Common myeloid progenitor, CD34-positive (primary cell): ENCODE measurements at regions of chr2 and their contacts with region 1.

Region 1: GRCh38 chr2:102020596-102021181 is 28.9 kb downstream of the IL1R2 start:
- DNase-seq: peak; percentile 74 to 84 (median 80)
- H3K4me3 ChIP-seq: no peak overlapping the region
- H3K27ac ChIP-seq: no peak overlapping the region
- H3K4me1 ChIP-seq: peaks cover 0 to 4% (median 1%) of the 10 kb centered on the region in 4 experiments
- H3K27me3 ChIP-seq: no peaks in the 10 kb centered on the region

Region 2: DNA sequence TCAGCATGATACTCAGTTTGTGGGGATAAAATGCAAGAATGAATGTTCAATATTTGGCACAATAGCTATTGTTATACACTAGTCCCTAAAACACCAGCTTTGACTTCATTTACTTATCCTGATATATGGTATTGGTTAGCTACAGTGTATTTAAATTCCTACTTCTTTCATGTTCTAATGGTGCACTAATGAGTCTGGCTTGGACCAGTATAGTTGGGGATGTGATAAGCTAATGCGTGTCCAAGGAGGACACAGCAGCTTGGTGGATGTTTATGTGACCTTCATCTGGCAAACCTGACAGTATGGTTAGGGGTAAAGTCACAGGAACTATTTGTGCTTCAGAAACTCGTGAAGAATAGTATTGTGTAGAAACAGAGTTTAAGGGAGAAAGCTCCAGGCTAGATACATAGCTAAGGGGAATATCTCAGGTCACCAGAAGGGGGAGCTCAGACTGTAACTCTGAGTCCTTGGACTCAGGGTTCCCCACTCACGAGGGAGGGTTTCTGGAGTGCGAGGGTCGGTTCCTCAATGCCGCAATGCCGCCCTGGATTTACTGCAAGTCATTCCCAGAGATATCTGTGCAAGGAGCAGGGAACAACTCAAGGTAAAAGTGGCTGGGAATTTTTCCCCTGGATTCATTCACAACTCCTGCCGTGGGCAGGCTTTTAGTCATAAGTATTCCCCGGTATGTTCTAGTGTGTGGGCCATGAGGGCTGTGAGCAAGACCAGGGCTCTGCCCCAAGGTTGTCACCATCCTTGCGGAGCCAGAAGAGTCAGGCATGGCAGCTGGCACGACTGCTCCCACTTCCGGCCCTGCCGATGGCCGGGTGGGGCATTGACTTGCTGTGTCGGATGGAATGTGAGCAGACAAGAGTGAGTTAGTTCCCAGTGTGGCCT is 14.5 kb before region 1 on chr2:
- CTCF ChIA-PET with region 1: interaction called, 13 read pairs
- POLR2A ChIA-PET with region 1: no interaction called
- DNase-seq: peak; percentile 68 to 84 (median 76)
- H3K4me3 ChIP-seq: no peak overlapping the region
- H3K27ac ChIP-seq: no peak overlapping the region
- H3K4me1 ChIP-seq: peaks cover 0 to 17% (median 10%) of the 10 kb centered on the region in 4 experiments
- H3K27me3 ChIP-seq: no peaks in the 10 kb centered on the region

Region 3: DNA sequence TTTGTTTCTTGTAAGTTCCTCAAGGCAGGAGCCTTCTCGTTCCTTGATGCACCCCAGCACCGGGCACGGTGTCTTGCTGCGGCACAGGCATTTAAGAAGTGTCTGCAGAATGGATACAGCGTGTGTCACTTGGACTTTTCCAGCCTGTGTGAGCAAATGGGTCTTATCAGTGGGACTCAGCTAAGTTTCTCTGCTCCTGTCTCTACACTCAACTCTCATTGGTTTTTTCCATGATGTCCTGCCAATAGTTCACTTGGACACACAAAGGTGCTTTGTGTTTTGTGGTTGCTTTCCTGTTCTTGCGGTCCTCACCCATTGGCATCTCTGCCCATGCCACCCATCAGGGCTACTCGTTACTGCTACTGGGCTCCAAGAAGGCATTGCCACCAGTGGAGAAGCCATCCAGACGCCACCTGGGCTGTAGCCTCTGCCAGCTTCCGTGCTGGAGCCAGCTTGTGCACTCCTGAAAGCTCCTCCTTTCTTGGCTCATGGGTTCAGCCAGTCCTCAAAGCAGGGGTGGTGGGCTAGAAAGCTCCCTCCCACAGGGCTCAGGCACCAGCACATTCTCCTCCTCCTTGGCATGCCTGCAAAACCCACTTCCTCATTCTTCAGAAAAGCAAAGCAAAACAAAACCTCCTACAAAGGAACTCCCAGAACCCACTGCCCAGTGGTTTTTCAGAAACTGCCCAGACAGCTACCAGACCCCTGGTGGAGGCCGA is 12.5 kb after region 1 on chr2:
- CTCF ChIA-PET with region 1: interaction called, 10 read pairs
- POLR2A ChIA-PET with region 1: no interaction called
- DNase-seq: peak; percentile 76 to 94 (median 92)
- H3K4me3 ChIP-seq: peak overlapping the region in 4 of 7 experiments; percentile 7 to 59 (median 44)
- H3K27ac ChIP-seq: no peak overlapping the region
- H3K4me1 ChIP-seq: peaks cover 14 to 48% (median 35%) of the 10 kb centered on the region in 4 experiments
- H3K27me3 ChIP-seq: no peaks in the 10 kb centered on the region